Sciatic nerve (tissue), 2 donors: ENCODE measurements at regions of chr11 and their contacts with region 1.

Region 1: DNA sequence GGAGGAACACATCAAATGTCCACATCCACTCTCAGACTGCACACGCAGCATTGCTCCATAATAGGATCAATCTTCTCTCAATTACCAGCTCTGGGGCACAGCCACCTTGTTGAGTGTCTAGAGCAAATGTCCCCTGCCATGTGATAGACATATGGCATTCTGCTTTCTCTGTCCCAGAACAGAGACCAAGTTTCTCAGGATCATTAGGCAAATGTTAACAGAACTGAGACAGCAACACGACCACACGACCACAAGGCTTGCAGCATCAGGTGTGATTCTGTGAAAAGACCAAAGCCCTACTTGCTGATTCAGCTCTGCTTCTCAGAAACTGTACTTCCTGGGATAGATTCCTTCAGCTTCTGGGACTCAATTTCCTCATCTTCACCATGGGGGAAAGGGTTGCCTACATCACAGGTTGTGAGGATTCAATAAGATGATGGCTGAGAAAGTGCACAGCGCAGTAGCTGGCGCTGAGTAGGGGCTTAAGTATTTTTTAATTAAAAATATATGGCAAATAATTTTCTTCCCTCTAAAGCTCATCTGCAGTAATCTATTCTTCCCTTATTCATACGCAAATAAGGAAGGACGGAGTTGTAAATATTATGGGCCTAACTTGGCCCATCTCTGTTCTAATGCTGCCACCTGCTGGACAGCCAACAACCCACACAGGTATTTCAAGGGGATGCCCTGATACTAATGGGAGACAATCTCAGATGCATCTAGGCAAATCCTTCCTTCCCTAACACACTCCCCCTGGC is 54.3 kb upstream of the USP47 start:
- DNase-seq: peak; percentile 90
- ATAC-seq: peak; percentile 94

Region 2: DNA sequence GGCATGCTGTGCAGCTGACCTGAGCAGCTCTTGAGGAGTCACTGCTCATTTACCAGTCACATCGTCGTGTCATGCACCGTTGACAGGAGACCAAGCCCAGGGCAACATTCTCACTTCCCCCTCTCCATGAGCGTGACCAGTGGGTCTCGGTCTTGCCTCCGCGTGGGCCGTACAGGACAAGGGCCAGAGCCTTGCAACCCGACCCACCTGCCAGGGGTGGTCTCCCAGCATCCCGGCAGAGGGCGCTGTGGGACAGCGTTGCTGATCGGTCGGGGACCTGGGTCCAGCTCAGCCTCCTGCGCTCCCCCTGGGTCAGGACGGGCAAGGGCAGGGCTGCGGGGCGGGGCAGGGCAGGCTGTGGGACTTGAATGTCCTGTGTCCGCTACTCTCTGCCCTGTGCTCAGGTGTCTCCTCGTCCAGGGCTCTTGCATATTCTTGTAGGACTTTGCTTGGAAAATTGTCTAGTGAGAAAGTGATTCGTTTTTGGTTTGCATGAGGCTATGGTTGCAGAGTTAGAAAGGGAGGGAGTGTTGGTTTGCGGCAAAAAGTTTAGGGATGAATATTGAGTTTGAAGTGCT is 995.0 kb before region 1 on chr11:
- intact Hi-C with region 1: loop called (anchors 10 kb)
- DNase-seq: peak; percentile 92
- ATAC-seq: peak; percentile 96

Region 3: DNA sequence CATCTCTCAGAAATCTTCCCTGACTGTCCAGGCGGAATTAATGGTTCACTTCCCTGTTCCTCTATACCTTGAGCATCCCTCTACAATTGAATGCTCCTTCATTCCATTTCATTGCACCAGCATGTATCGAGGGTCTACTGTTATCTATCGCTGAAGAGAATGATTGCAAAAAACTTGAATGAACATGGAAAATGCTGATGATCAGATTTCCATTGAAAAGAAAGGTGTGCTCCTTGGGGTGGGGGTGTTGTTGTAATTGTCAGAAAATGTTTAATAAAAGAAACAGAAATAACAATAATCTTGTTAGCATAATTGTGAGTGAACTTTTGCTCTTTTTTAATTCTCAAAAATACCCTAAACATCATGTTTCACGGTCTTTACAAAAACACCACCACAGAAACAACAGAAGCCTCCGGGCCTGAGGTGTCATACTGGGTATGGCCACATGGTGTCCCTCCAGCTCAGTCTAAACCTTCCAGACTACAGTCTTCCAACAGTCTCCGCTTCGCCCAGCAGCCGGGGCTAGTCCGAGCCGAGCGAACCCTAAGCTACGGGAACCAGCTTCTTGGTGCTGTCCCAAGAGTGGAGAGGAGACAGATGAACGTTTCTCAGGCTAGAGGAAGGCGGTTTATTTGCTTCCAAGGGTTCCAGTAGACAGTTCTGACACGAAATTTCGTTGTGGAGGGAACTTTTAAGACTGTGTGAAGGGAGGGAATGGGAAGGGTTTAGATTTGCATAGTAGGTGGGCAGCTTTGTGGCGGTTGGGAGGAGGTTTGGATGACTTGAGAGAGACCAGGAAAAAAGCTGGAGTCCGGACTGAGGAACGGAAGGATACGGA is 853.8 kb before region 1 on chr11:
- intact Hi-C with region 1: loop called (anchors 10 kb)
- DNase-seq: peak; percentile 95
- ATAC-seq: peak; percentile 94

Region 4: DNA sequence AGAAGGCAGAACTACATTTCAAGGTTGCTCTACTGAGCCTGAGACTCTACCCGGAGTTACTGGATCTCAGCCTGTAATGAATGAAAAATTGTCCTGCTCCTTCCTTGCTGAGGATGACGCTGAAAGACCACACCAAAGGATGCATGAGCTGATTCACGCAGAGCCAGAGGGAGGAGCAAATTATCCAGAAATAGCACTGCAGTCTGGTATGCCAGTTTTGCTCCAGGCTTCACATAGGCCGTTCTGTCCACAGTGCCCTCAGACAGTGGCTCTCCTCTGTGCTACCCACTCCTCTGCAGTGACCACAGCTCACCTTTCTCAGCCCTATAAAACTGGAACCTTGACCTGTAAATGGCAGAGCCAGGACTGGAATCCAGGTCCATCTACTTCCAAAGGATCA is 86.4 kb before region 1 on chr11:
- intact Hi-C with region 1: no loop called
- DNase-seq: no peak
- ATAC-seq: no peak

Region 5: DNA sequence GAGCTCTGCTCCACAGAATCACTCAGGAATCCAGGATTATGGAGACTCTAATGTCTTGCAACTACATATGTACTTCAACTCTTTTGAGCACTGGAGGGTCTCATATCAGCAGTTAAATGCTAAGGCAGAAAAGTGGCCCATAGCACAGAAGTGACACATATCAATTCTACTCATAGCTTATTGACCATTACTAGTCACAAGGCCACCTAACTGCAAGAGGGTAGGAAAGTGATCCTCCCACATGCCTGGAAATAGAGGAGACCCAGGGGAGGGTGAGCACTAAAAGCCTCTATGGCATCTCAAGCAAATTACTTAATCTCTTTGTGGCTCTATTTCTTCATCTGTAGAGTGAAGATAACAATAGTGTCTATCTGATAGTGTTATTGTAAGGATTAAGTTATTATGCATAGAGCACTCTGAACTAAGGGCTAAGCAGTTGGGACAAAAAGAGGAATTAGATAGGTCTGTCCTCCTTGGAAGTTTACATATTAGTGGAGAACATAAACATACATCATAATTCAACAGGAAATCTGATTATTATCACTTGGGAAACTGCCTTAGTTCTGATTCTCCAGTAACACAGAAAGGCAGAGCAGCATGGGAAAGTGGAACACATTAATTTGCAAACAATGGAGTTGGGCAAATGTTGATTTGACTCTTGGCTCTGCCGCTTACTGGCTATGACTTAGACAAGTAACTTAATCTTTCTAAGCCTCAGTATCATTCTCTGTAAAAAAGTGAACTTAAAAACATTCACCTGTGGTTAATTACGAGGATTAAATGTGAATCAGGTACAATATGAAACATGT is 29.2 kb after region 1 on chr11:
- intact Hi-C with region 1: no loop called
- DNase-seq: no peak
- ATAC-seq: no peak